A673 (cell line): ENCODE measurements at regions of chr10 and their contacts with region 1.

Region 1: GRCh38 chr10:4656576-4657182 is 169.3 kb upstream of the AKR1E2 start:
- DNase-seq: peak; percentile 80
- H3K4me3 ChIP-seq: no peak overlapping the region
- H3K27ac ChIP-seq: no peak overlapping the region
- H3K4me1 ChIP-seq: peaks cover 35% of the 10 kb centered on the region
- H3K27me3 ChIP-seq: no peaks in the 10 kb centered on the region
- CTCF ChIP-seq: peak; percentile 88

Region 2: GRCh38 chr10:3197348-3198003 is 1459.2 kb before region 1 on chr10:
- CTCF ChIA-PET with region 1: interaction called, 5 read pairs
- POLR2A ChIA-PET with region 1: no interaction called
- intact Hi-C with region 1: loop called (anchors 10 kb)
- DNase-seq: peak; percentile 83
- H3K4me3 ChIP-seq: peak overlapping the region; percentile 20
- H3K27ac ChIP-seq: no peak overlapping the region
- H3K4me1 ChIP-seq: peaks cover 11% of the 10 kb centered on the region
- H3K27me3 ChIP-seq: no peaks in the 10 kb centered on the region
- CTCF ChIP-seq: peak; percentile 91

Region 3: GRCh38 chr10:3239066-3239919 is 1417.4 kb before region 1 on chr10:
- CTCF ChIA-PET with region 1: no interaction called
- POLR2A ChIA-PET with region 1: no interaction called
- intact Hi-C with region 1: loop called (anchors 5 kb)
- DNase-seq: peak; percentile 66
- H3K4me3 ChIP-seq: no peak overlapping the region
- H3K27ac ChIP-seq: no peak overlapping the region
- H3K4me1 ChIP-seq: peaks cover 6% of the 10 kb centered on the region
- H3K27me3 ChIP-seq: no peaks in the 10 kb centered on the region
- CTCF ChIP-seq: peak; percentile 91

Region 4: GRCh38 chr10:4174197-4174596 is 482.5 kb before region 1 on chr10:
- CTCF ChIA-PET with region 1: no interaction called
- POLR2A ChIA-PET with region 1: no interaction called
- intact Hi-C with region 1: loop called (anchors 10 kb)
- DNase-seq: peak; percentile 61
- H3K4me3 ChIP-seq: no peak overlapping the region
- H3K27ac ChIP-seq: no peak overlapping the region
- H3K4me1 ChIP-seq: no peaks in the 10 kb centered on the region
- H3K27me3 ChIP-seq: no peaks in the 10 kb centered on the region
- CTCF ChIP-seq: peak; percentile 49

Region 5: GRCh38 chr10:4344511-4344994 is 312.1 kb before region 1 on chr10:
- CTCF ChIA-PET with region 1: no interaction called
- POLR2A ChIA-PET with region 1: no interaction called
- intact Hi-C with region 1: loop called (anchors 10 kb)
- DNase-seq: peak; percentile 85
- H3K4me3 ChIP-seq: no peak overlapping the region
- H3K27ac ChIP-seq: peak overlapping the region; percentile 76
- H3K4me1 ChIP-seq: peaks cover 14% of the 10 kb centered on the region
- H3K27me3 ChIP-seq: peaks cover 6% of the 10 kb centered on the region
- CTCF ChIP-seq: 0 out of 2 replicates have a peak, but pooled peaks have one; percentile 9

Region 6: GRCh38 chr10:4512671-4513240 is 143.9 kb before region 1 on chr10:
- CTCF ChIA-PET with region 1: interaction called, 6 read pairs
- POLR2A ChIA-PET with region 1: no interaction called
- intact Hi-C with region 1: loop called (anchors 2 kb)
- DNase-seq: peak; percentile 73
- H3K4me3 ChIP-seq: no peak overlapping the region
- H3K27ac ChIP-seq: no peak overlapping the region
- H3K4me1 ChIP-seq: no peaks in the 10 kb centered on the region
- H3K27me3 ChIP-seq: no peaks in the 10 kb centered on the region
- CTCF ChIP-seq: peak; percentile 78

Region 7: GRCh38 chr10:4639960-4640359 is 16.7 kb before region 1 on chr10:
- CTCF ChIA-PET with region 1: no interaction called
- POLR2A ChIA-PET with region 1: no interaction called
- intact Hi-C with region 1: no loop called
- DNase-seq: no peak
- H3K4me3 ChIP-seq: no peak overlapping the region
- H3K27ac ChIP-seq: no peak overlapping the region
- H3K4me1 ChIP-seq: no peaks in the 10 kb centered on the region
- H3K27me3 ChIP-seq: no peaks in the 10 kb centered on the region
- CTCF ChIP-seq: no peak

Region 8: DNA sequence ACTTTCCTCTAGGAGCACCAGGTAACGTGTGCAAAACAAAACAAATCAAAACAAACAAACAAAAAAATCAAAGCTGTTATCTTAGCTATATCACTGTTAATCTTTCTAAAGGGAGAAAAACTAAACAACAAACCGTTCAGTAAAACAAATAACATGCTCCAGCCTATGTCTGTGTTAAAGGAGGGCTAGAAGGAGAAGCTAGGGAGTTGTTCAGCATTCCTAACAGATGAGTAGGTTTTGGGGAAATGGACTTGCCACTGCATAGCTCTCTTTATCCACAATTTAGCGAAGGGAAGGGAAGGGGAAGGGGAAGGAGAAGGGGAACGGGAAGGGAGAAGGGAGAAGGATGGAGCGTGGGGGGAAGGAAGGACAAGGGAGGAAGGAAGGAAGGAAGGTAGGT is 35.1 kb after region 1 on chr10:
- CTCF ChIA-PET with region 1: no interaction called
- POLR2A ChIA-PET with region 1: interaction called, 11 read pairs
- intact Hi-C with region 1: no loop called
- DNase-seq: peak; percentile 81
- H3K4me3 ChIP-seq: no peak overlapping the region
- H3K27ac ChIP-seq: peak overlapping the region; percentile 76
- H3K4me1 ChIP-seq: peaks cover 12% of the 10 kb centered on the region
- H3K27me3 ChIP-seq: no peaks in the 10 kb centered on the region
- CTCF ChIP-seq: no peak